Endothelial cell of umbilical vein (primary cell): ENCODE measurements at regions of chr5 and their contacts with region 1.

Region 1: DNA sequence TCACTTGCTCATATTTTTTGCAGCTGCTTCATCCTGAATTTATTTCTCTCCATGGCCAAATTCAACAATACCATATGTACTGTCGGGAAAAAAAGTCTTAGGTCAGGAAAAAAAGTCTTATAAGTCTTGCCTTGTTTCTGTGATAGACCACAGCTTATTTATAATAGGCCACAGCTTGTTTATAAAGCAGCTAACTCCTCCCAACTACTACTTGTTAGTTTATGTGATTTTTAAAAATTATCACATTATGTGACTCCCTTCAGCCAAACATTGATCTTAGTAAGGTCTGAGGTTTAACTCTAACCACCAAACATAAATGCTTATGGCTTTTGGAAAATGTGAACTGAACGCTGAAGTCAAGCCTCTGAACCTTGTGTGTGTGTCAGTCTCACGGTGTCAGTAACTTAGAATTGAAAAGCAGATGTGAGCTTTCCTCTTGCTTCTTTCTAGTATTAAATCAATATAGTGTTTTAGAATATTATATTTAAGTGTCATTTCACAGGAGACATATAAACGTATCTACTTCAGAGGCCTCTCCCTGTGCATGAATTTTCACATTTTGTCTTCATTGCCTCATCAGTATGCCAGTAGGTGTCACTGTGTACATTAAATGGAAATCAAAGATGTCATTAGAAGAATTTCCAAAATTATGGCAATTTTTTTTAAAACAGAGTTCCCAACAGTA is 51.3 kb downstream of the SNX24 start:
- DNase-seq: peak; percentile 46
- H3K4me3 ChIP-seq: no peak overlapping the region
- H3K27ac ChIP-seq: no peak overlapping the region
- H3K4me1 ChIP-seq: no peaks in the 10 kb centered on the region
- H3K27me3 ChIP-seq: no peaks in the 10 kb centered on the region
- CTCF ChIP-seq: peak; percentile 31 to 40
- POLR2A ChIP-seq: no peak

Region 2: GRCh38 chr5:122751293-122751753 is 145.4 kb before region 1 on chr5:
- CTCF ChIA-PET with region 1: no interaction called
- POLR2A ChIA-PET with region 1: no interaction called
- dilution Hi-C with region 1: no loop called
- intact Hi-C with region 1: no loop called
- DNase-seq: peak; percentile 84
- H3K4me3 ChIP-seq: no peak overlapping the region
- H3K27ac ChIP-seq: no peak overlapping the region
- H3K4me1 ChIP-seq: peaks cover 6% of the 10 kb centered on the region
- H3K27me3 ChIP-seq: peaks cover 0 to 1% of the 10 kb centered on the region in 2 experiments
- CTCF ChIP-seq: no peak
- POLR2A ChIP-seq: no peak

Region 3: DNA sequence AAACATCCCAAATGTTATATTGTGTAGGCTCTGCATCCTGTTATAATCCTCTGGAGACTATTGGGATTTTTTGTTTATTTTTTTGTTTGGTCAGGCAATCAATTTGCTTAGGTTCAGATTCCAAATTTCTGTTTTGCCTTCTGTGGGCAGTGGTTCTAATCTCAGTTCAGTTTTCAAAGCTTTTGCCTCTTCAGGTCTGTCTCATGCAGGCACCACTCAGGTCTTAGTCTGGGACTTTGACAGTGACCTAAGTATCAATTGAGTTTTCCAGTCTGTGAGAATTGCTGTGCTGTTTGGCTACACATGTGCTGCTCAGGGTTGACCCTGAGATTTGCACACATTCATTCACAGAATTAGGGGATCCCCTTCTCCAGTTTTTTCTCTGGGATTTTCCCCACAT is 107.7 kb before region 1 on chr5:
- CTCF ChIA-PET with region 1: no interaction called
- POLR2A ChIA-PET with region 1: no interaction called
- dilution Hi-C with region 1: no loop called
- intact Hi-C with region 1: no loop called
- DNase-seq: no peak
- H3K4me3 ChIP-seq: no peak overlapping the region
- H3K27ac ChIP-seq: no peak overlapping the region
- H3K4me1 ChIP-seq: no peaks in the 10 kb centered on the region
- H3K27me3 ChIP-seq: no peaks in the 10 kb centered on the region
- CTCF ChIP-seq: no peak
- POLR2A ChIP-seq: no peak

Region 4: GRCh38 chr5:123036391-123037103 is 139.8 kb after region 1 on chr5 and contains the start of gene PPIC:
- CTCF ChIA-PET with region 1: no interaction called
- POLR2A ChIA-PET with region 1: no interaction called
- dilution Hi-C with region 1: no loop called
- intact Hi-C with region 1: loop called (anchors 5 kb)
- DNase-seq: peak; percentile 86
- H3K4me3 ChIP-seq: peak within 1 kb of the TSS; percentile 77 to 90 (median 85)
- H3K27ac ChIP-seq: peak within 1 kb of the TSS; percentile 44
- H3K4me1 ChIP-seq: peaks cover 8% of the 10 kb centered on the region
- H3K27me3 ChIP-seq: no peaks in the 10 kb centered on the region
- CTCF ChIP-seq: no peak
- POLR2A ChIP-seq: peak; percentile 82
- total RNA-seq, gene PPIC: 26.5 TPM in 2 replicates

Region 5: DNA sequence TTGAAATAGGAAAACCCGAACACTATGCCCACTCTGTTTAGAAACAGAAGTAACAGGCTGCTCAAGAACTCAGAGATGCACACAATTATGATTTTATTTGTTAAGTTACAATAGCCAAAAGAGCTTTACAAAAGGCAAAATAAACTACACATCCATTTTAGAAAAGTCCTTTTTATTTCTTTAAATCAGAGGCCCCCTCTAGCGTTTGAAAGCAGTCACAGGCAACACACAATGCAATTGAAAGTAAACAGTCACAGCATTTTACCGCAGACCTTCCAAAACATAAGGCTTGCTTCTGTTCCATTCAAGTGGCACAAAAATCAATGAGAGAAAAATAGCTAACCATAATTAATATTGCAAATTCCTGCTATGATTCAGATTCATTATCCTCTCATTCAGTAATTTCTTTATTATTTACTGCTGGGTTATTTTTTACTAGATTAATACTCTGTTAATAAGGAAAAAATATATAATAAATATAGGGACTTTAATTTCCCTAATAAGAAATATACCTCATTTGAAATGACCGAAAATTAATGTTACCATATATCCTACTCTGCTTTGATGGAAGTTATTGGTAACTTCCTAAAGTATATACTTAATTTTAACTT is 448.2 kb after region 1 on chr5:
- CTCF ChIA-PET with region 1: interaction called, 11 read pairs
- POLR2A ChIA-PET with region 1: no interaction called
- dilution Hi-C with region 1: no loop called
- intact Hi-C with region 1: loop called (anchors 2 kb)
- DNase-seq: peak; percentile 45
- H3K4me3 ChIP-seq: no peak overlapping the region
- H3K27ac ChIP-seq: no peak overlapping the region
- H3K4me1 ChIP-seq: no peaks in the 10 kb centered on the region
- H3K27me3 ChIP-seq: no peaks in the 10 kb centered on the region
- CTCF ChIP-seq: peak; percentile 34 to 55
- POLR2A ChIP-seq: no peak

Region 6: DNA sequence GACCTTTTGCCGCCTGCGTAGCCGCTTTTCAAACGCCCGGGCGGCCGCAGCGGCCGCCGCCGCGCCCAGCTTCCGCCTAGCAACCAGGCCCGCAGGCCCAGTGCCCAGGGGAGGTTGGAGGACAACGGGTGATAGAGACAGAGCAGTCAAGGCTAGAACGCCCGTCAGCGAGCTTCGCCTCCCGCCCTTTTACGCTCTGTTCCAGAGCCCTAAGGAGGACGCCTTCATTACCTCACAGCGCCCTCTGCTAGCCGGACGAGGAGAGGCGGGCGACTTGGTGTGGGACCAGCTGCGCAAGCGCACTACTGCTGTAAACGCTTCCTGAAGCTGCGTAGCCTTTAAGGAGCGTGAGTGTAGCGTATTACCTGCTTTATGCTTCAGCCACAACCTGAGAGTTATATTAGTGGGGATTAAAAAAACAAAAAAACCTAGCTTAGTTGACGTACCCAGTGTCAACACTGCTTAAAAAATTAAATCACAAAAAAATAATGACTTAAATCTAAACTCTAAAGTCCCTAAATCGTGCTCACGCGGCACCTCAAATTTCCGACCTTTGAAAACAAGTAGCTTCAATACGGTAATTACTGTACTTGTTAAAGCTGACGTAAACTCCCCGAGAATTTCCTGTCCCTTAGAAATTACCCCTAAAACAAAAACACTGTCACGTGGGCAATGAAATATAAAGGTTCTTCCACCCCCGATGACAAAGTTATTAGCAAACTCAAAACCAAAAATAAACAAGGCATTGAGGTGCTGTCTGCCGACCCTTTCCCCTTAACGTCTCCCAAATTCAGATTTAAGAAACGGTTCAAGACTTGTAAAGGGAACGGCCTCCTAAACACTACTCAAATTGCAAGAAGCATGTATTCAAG is 526.8 kb after region 1 on chr5 and contains the start of gene CEP120:
- CTCF ChIA-PET with region 1: interaction called, 7 read pairs
- POLR2A ChIA-PET with region 1: no interaction called
- dilution Hi-C with region 1: no loop called
- intact Hi-C with region 1: loop called (anchors 2 kb)
- DNase-seq: peak; percentile 100
- H3K4me3 ChIP-seq: peak within 1 kb of the TSS; percentile 81 to 94 (median 93)
- H3K27ac ChIP-seq: peak within 1 kb of the TSS; percentile 62
- H3K4me1 ChIP-seq: peaks cover 11% of the 10 kb centered on the region
- H3K27me3 ChIP-seq: no peaks in the 10 kb centered on the region
- CTCF ChIP-seq: peak; percentile 88
- POLR2A ChIP-seq: peak; percentile 82
- total RNA-seq, gene CEP120: 15.0 and 18.8 TPM in 2 replicates

Region 7: DNA sequence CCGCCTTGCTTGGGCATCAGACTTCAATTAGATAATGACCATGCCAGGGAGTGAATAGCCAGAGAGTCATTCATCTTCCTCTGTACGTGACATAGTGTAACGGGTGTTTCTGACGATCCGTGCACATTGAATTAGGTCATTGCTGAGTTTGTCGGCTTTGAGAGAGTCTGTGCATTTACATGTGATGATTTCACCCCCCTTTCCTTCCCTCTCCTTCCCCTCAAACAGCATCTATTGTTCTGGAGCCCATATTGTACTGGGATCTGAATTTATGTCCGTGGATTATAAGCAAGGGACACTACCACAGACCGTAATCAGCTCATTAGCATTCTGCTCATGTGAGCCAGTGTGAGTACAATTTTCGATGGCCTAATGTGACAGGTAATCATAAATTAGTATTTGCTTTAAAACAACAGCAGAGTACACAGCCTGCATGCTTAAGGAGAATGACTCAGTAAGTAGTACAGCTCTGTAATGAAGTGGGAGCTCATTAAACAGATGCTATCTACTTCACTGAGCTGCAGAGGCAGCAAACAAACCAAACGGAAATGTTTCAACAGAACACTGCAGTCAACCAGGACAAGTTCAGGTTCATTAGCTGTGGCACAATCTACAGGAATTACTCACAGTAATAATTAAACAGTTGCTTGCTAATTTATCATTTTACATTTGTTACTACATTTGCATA is 917.3 kb after region 1 on chr5:
- CTCF ChIA-PET with region 1: no interaction called
- POLR2A ChIA-PET with region 1: no interaction called
- dilution Hi-C with region 1: no loop called
- intact Hi-C with region 1: no loop called
- DNase-seq: peak; percentile 93
- H3K4me3 ChIP-seq: peak overlapping the region in 1 of 3 experiments; percentile 6
- H3K27ac ChIP-seq: peak overlapping the region; percentile 51
- H3K4me1 ChIP-seq: peaks cover 13% of the 10 kb centered on the region
- H3K27me3 ChIP-seq: no peaks in the 10 kb centered on the region
- CTCF ChIP-seq: no peak
- POLR2A ChIP-seq: no peak